CD8-positive, alpha-beta T cell (primary cell): ENCODE measurements at regions of chr15 and their contacts with region 1.

Region 1: DNA sequence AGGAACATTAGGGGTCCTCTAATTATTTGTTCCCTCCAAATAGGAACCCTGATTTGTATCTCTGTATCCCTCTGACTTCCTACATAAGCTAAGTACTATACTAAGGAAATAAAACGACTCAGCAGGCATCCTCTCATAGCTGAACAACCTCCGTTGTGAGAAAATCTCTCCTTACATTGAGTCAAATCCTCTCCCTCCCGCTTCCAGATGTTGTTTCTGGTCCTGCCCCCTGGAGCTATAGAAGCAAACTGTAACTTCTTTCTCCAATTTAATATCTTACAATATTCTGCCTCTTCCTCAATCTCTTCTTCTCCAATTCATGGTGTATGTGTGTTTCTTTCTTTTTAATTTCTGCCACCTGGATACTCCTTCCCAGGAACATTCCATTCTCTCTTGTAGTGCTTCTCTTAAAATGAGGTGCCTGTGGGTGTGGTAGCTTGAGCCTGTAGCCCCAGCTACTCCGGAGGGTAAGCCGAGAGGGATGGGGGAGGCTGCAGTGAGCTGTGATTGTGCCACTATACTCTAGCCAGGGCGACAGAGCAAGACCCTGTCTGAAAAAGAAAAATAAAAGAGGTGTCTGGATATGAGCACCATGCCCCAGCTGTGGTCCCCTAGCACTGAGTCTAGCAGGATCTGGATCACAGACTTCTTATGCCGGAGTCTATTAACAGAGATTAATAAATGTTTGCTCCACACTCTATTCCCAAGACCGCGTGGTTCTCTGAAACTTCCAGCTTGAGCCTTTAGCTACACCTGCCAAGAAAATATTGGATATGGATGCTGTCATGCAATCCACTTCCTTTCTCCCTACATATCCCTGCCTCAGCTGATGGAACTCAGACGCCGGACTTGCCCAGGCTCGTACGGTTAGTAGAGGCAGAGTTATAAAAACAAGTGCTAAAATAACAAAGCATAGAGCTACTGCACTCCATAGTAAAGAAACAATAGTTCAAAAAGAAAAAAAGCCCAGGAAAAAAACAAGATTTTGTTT is 42.9 kb upstream of the NEO1 start:
- DNase-seq: no peak
- ATAC-seq: no peak
- H3K4me3 ChIP-seq: no peak overlapping the region
- H3K4me3 Mint-ChIP-seq: no peak overlapping the region
- H3K27ac ChIP-seq: no peak overlapping the region
- H3K27ac Mint-ChIP-seq: no peak overlapping the region
- H3K4me1 ChIP-seq: no peaks in the 10 kb centered on the region
- H3K4me1 Mint-ChIP-seq: no peaks in the 10 kb centered on the region
- H3K27me3 ChIP-seq: peaks cover 0 to 8% of the 10 kb centered on the region in 2 experiments
- H3K27me3 Mint-ChIP-seq: peaks cover 39% of the 10 kb centered on the region
- CTCF ChIP-seq: no peak

Region 2: GRCh38 chr15:72813345-72814004 is 195.9 kb before region 1 on chr15:
- CTCF ChIA-PET with region 1: no interaction called
- POLR2A ChIA-PET with region 1: no interaction called
- intact Hi-C with region 1: loop called in 1 of 2 experiments (anchors 10 kb)
- DNase-seq: no peak
- ATAC-seq: no peak
- H3K4me3 ChIP-seq: no peak overlapping the region
- H3K4me3 Mint-ChIP-seq: no peak overlapping the region
- H3K27ac ChIP-seq: no peak overlapping the region
- H3K27ac Mint-ChIP-seq: no peak overlapping the region
- H3K4me1 ChIP-seq: no peaks in the 10 kb centered on the region
- H3K4me1 Mint-ChIP-seq: peaks cover 16% of the 10 kb centered on the region
- H3K27me3 ChIP-seq: no peaks in the 10 kb centered on the region
- H3K27me3 Mint-ChIP-seq: peaks cover 14% of the 10 kb centered on the region
- CTCF ChIP-seq: no peak

Region 3: DNA sequence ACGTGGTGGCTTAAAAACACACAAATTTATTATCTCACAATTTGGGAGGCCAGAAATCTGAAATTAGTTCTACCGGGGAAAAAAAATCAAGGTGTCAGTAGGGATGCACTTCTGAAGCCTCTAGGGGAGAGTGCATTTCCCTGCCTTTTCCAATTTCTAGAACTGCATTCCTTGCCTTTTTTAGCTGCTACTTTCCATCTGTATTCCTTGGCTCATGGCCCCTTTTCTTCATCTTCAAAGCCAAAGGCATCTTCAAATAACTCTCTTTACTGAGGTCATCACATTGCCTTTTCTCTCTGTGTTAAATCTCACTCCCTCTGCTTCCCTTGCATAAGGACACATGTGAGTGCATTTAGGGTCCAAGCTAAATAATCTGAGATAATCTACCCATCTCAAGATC is 26.6 kb before region 1 on chr15:
- CTCF ChIA-PET with region 1: no interaction called
- POLR2A ChIA-PET with region 1: no interaction called
- intact Hi-C with region 1: no loop called
- DNase-seq: no peak
- ATAC-seq: no peak
- H3K4me3 ChIP-seq: no peak overlapping the region
- H3K4me3 Mint-ChIP-seq: no peak overlapping the region
- H3K27ac ChIP-seq: no peak overlapping the region
- H3K27ac Mint-ChIP-seq: no peak overlapping the region
- H3K4me1 ChIP-seq: no peaks in the 10 kb centered on the region
- H3K4me1 Mint-ChIP-seq: no peaks in the 10 kb centered on the region
- H3K27me3 ChIP-seq: no peaks in the 10 kb centered on the region
- H3K27me3 Mint-ChIP-seq: peaks cover 25% of the 10 kb centered on the region
- CTCF ChIP-seq: no peak

Region 4: DNA sequence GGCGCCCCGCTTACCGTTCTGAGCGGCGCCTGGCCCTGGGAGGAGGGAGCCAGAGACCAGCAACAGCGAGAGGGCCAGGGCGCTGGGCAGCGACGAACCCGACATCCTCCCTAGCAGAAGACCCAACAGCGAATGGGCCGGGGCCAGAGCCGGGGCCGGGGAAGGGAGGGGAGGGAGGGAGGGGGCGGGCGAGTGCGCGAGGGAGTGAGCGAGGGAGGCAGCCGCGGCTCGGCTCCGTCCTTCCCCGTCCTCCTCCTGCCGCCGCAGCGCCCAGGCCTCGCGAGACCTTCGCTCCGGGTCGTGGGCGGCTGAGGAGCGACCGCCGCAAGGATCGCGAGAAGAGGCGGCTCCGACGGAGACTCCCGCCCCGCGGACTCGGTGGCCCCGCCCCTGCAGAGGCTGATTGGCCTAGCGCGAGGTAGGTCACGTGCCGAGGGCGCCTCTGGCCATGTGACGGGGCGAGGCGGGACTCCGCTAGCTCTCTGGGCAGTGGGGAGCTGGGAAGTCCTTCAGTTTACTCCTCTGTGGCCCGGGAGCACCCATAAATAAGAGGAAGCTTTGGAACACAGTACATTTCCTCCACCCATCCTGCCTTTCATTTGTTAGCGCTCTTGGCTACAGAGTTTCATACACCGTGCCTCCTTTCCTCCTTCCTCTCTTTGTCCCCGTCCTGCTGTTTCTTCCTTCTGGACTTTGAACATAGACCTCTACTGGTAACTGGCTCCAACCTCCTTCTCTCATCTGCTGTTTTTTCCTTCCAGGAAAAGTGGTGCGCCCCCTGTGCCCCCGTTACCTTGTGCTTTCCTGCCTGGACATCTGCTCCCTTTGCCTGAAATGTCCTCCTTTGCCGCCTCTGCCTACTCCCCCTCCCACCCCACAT is 624.0 kb after region 1 on chr15 and contains the start of gene NPTN:
- CTCF ChIA-PET with region 1: no interaction called
- POLR2A ChIA-PET with region 1: no interaction called
- intact Hi-C with region 1: no loop called
- DNase-seq: peak; percentile 96 to 99 (median 97)
- ATAC-seq: peak; percentile 90
- H3K4me3 ChIP-seq: peak within 1 kb of the TSS; percentile 51 to 74
- H3K4me3 Mint-ChIP-seq: peak within 1 kb of the TSS; percentile 82
- H3K27ac ChIP-seq: peak within 1 kb of the TSS; percentile 25 to 78
- H3K27ac Mint-ChIP-seq: peak within 1 kb of the TSS; percentile 81
- H3K4me1 ChIP-seq: peaks cover 33% of the 10 kb centered on the region
- H3K4me1 Mint-ChIP-seq: peaks cover 45% of the 10 kb centered on the region
- H3K27me3 ChIP-seq: no peaks in the 10 kb centered on the region
- H3K27me3 Mint-ChIP-seq: peaks cover 8% of the 10 kb centered on the region
- CTCF ChIP-seq: no peak
- total RNA-seq, gene NPTN: 12.5 to 18.2 TPM